ENCODE measurements at regions of chr4 and their contacts with region 1.

Region 1: DNA sequence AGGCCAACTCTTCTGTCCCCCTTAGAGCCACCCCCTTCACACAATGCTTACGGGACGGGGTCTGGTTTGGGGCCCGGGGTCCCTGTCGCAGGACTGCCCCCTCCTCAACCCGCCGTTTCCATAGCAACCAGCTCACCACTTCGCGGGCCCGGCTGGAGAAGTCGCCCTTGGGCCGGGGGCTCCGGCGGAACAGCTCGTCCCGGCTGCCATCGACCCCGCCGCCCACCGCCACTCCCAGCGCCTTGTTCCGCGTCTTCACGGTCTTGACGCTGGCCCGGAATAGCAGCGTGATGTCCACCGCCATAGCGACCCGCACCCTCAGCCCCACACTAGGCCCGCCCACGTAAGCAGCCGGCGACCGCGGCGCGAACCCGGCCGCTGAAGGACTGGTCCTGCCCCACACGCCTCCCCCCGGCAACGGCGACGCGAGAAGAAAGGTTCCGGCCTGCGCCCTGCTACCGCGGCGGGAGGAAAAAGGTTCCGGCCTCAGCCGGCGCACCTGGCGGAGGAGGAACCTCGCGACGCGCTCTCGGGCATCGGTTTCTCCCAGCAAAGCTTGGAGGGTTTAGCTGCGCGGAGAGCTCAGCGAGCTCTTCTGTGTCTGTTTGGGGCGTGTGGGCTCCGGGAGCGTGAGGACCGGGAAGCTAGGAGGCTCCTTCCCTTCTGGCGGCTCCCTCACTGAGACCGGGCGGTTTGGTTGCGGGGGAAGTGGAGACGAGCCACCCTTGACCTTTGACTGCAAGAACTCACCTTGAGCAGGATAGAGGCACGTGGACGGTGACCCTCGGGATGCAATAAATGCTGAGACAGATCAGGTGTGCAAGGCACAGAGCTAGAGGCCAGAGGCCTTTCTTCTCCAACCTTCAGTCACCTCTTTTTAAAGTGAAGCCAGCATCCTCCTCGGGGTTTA is at the start of gene STX18:
- DNase-seq: peak; percentile 73
- ATAC-seq: peak; percentile 96
- H3K4me3 ChIP-seq: peak within 1 kb of the TSS; percentile 86 to 94 (median 86)
- H3K27ac ChIP-seq: peak within 1 kb of the TSS; percentile 91
- H3K4me1 ChIP-seq: peaks cover 54% of the 10 kb centered on the region
- H3K27me3 ChIP-seq: no peaks in the 10 kb centered on the region
- CTCF ChIP-seq: peak; percentile 38; the same call in 1 of the 2 replicates
- EP300 ChIP-seq: peak; percentile 58 to 79; a peak in 3 of 4 replicates
- POLR2A ChIP-seq: peak; percentile 70 to 81
- RAD21 ChIP-seq: peak; percentile 74
- total RNA-seq, gene STX18: 37.1 and 41.2 TPM in 2 replicates

Region 2: DNA sequence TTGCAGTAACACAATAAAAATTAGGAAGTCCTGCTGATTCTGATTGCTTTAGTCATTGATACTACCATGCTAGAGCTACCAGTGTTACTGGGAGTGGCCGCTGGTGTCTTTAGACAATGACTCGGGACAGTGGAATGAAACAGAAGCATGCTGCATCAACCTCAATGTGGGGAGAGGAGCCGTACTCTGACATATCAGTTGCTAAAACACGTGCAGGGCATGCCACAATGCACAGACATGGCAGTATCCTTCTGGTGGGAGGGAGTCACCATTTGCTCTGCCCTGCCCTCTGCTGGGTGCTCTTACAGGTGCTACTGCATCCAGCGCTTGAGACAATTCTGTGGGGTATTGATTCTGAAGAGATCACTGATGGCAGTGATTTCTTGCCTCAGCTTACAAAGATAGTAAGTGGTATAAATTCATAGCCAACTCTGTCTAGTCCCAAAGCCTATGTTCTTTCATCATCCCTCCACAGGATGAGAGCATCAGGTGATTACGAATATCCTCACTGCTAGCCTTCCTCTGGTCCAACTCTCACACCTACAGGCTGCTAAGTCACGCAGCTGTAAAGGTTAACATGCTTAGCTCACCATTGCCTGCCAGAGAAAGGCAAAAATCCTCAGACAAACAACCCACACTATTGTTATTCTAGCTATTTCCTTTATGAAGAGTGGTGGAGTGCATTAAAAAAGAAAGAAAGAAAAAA is 111.3 kb before region 1 on chr4:
- CTCF ChIA-PET with region 1: no interaction called
- POLR2A ChIA-PET with region 1: no interaction called
- in situ Hi-C with region 1: no loop called
- intact Hi-C with region 1: no loop called
- DNase-seq: peak; percentile 59
- ATAC-seq: peak; percentile 96
- H3K4me3 ChIP-seq: no peak overlapping the region
- H3K27ac ChIP-seq: no peak overlapping the region
- H3K4me1 ChIP-seq: no peaks in the 10 kb centered on the region
- H3K27me3 ChIP-seq: no peaks in the 10 kb centered on the region
- CTCF ChIP-seq: peak; percentile 78
- EP300 ChIP-seq: no peak
- POLR2A ChIP-seq: no peak
- RAD21 ChIP-seq: 0 out of 2 replicates have a peak, but pooled peaks have one; percentile 28

Region 3: DNA sequence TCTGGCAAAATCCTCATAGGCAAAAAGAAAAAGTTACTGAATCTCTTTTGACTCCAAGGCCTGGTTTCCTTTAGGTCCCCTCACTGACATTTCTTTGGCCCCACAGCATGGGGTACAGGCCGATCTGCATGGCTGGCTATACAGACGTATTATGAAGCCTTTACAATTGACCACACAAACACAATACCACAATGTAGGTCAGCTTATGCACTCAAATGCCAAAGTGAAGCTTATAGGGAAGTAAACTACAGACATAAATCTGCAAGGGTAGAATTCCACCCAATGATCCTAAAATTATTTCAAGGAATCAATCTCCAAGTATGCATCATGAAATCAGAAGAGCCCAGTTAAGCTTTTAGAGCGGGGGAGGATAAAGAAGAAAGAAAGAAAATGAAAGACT is 20.8 kb before region 1 on chr4:
- CTCF ChIA-PET with region 1: no interaction called
- POLR2A ChIA-PET with region 1: interaction called, 4 read pairs
- in situ Hi-C with region 1: no loop called
- intact Hi-C with region 1: loop called (anchors 2 kb)
- DNase-seq: no peak
- ATAC-seq: no peak
- H3K4me3 ChIP-seq: no peak overlapping the region
- H3K27ac ChIP-seq: no peak overlapping the region
- H3K4me1 ChIP-seq: peaks cover 41% of the 10 kb centered on the region
- H3K27me3 ChIP-seq: no peaks in the 10 kb centered on the region
- CTCF ChIP-seq: no peak
- EP300 ChIP-seq: no peak
- POLR2A ChIP-seq: no peak
- RAD21 ChIP-seq: no peak

Region 4: DNA sequence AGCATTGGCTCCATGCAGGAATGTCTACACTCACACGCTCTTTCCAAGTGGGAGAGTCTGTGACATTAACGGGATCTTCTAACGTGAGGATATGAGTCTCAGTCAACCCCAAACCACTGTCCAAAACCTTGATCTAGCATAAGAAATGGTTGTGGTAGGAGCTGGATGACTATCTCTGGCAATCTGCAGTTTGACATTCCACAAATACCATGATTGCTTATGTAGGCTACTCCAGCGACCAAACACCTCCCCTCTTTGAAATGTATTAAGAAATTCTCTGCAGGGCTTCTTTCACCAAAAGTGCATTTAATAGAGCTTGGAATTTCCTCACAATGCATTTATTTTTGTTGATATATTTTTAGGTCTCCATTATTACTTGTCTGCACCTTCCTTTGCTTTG is 14.0 kb after region 1 on chr4:
- CTCF ChIA-PET with region 1: no interaction called
- POLR2A ChIA-PET with region 1: interaction called, 12 read pairs
- in situ Hi-C with region 1: no loop called
- intact Hi-C with region 1: no loop called
- DNase-seq: peak; percentile 63
- ATAC-seq: peak; percentile 66
- H3K4me3 ChIP-seq: no peak overlapping the region
- H3K27ac ChIP-seq: peak overlapping the region; percentile 27
- H3K4me1 ChIP-seq: peaks cover 42% of the 10 kb centered on the region
- H3K27me3 ChIP-seq: no peaks in the 10 kb centered on the region
- CTCF ChIP-seq: no peak
- EP300 ChIP-seq: no peak
- POLR2A ChIP-seq: no peak
- RAD21 ChIP-seq: no peak

Region 5: GRCh38 chr4:4640692-4641091 is 98.8 kb after region 1 on chr4:
- CTCF ChIA-PET with region 1: no interaction called
- POLR2A ChIA-PET with region 1: interaction called, 12 read pairs
- in situ Hi-C with region 1: no loop called
- intact Hi-C with region 1: loop called (anchors 2 kb)
- DNase-seq: peak; percentile 86
- ATAC-seq: peak; percentile 94
- H3K4me3 ChIP-seq: peak overlapping the region; percentile 45 to 70 (median 63)
- H3K27ac ChIP-seq: peak overlapping the region; percentile 96
- H3K4me1 ChIP-seq: peaks cover 55% of the 10 kb centered on the region
- H3K27me3 ChIP-seq: no peaks in the 10 kb centered on the region; a peak in 1 of 5 replicates
- CTCF ChIP-seq: peak; percentile 69
- EP300 ChIP-seq: peak; percentile 46 to 82; a peak in 3 of 4 replicates
- POLR2A ChIP-seq: peak; percentile 51 to 58
- RAD21 ChIP-seq: peak; percentile 71

Region 6: GRCh38 chr4:5079581-5079980 is 537.7 kb after region 1 on chr4:
- CTCF ChIA-PET with region 1: no interaction called
- POLR2A ChIA-PET with region 1: no interaction called
- in situ Hi-C with region 1: no loop called
- intact Hi-C with region 1: no loop called
- DNase-seq: no peak
- ATAC-seq: no peak
- H3K4me3 ChIP-seq: no peak overlapping the region
- H3K27ac ChIP-seq: no peak overlapping the region
- H3K4me1 ChIP-seq: no peaks in the 10 kb centered on the region
- H3K27me3 ChIP-seq: no peaks in the 10 kb centered on the region; a peak in 1 of 5 replicates
- CTCF ChIP-seq: no peak
- EP300 ChIP-seq: no peak
- POLR2A ChIP-seq: no peak
- RAD21 ChIP-seq: no peak